Activated naive CD4-positive, alpha-beta T cell treated with anti-CD3 and anti-CD28 coated beads for 36 hours (primary cell): ENCODE measurements at regions of chr6 and their contacts with region 1.

Region 1: DNA sequence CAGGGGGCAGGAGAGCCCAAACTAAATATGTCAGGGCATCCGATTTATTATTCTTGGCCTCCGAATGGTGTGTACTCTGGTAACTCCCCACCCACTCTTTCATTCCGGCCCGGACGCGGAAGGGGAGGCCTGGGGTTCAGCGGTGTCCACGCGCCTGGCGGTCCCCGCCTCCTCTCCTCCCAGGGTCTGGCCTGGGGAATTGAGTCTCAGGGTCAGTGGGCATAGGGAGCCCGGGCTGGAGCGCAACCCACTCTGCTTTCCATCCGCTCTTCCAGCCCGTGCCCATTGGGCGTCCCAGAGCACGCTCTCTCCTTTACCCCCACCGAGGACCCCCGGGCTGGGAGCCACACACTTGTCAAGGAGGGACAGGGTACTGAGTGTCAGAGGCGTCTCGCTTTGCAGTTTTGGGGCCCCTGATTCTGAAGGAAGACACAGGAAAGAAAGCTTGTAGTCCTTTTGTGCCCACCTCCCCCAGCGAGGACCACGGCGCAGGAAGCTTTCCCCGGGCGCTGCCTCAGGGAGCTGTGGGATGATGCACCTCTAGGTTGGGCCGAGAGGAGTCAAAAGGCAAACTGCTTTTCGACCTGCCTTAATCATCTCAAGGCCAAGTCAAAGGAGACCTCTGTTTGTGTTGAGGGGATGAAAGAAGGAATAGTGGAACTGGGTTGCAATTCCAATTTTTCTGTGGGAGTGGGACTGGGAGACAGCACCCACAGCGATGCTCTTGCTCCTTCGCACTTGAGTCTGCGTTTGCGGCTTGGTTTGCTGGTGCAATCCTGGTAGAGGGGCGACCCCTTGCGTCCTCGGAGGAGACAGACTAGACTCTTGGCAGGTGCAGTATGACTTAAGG is 2.5 kb downstream of the RSPO3 start:
- DNase-seq: peak; percentile 90
- H3K4me3 Mint-ChIP-seq: no peak overlapping the region
- H3K27ac Mint-ChIP-seq: no peak overlapping the region
- H3K4me1 Mint-ChIP-seq: peaks cover 12% of the 10 kb centered on the region
- H3K27me3 Mint-ChIP-seq: peaks cover 51% of the 10 kb centered on the region

Region 2: DNA sequence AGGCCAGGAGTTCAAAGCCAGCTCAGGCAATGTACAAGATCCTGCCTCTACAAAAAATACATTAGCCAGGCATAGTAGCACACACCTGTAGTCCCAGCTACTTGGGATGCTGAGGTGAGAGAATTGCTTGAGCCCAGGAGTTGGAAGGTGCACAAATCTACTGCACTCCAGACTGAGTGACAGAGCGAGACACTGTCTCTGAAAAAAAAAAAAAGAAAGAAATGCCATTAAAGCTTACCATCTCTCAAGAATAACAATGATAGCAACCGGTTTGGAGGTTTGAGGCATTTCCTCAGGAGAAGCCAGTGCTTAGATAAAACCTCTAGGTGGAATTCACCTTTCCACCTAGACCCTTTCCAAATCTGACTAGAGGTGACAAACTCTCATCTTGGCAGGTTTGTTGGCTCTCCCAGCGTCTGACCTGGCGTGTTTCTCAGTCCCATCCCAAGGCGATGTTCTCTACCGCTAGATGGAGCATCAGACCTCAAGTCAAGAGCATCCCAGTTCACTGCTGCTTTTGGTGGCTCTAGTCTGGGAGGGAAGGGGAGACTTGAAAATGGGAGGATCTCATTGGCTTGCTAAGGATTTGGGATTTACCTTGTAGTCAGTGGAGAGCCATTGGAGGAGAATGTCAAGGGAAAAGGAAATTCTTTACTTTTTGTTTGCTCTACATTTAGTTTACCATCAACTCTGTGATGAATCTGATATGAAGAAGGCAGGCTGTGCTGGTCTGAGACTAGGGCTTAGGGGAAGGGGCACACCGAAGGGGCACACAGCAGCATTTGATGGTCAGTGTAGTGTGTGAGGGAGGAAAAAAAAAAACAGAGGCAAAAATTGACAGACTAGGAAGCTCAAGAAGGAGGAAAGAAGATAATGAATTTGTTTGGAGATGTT is 1262.3 kb before region 1 on chr6:
- CTCF ChIA-PET with region 1: no interaction called
- intact Hi-C with region 1: loop called (anchors 1 kb)
- DNase-seq: peak; percentile 57
- H3K4me3 Mint-ChIP-seq: no peak overlapping the region
- H3K27ac Mint-ChIP-seq: no peak overlapping the region
- H3K4me1 Mint-ChIP-seq: no peaks in the 10 kb centered on the region
- H3K27me3 Mint-ChIP-seq: no peaks in the 10 kb centered on the region

Region 3: GRCh38 chr6:126033696-126034095 is 1087.3 kb before region 1 on chr6:
- CTCF ChIA-PET with region 1: no interaction called
- intact Hi-C with region 1: loop called (anchors 1 kb)
- DNase-seq: no peak
- H3K4me3 Mint-ChIP-seq: no peak overlapping the region
- H3K27ac Mint-ChIP-seq: no peak overlapping the region
- H3K4me1 Mint-ChIP-seq: no peaks in the 10 kb centered on the region
- H3K27me3 Mint-ChIP-seq: no peaks in the 10 kb centered on the region

Region 4: DNA sequence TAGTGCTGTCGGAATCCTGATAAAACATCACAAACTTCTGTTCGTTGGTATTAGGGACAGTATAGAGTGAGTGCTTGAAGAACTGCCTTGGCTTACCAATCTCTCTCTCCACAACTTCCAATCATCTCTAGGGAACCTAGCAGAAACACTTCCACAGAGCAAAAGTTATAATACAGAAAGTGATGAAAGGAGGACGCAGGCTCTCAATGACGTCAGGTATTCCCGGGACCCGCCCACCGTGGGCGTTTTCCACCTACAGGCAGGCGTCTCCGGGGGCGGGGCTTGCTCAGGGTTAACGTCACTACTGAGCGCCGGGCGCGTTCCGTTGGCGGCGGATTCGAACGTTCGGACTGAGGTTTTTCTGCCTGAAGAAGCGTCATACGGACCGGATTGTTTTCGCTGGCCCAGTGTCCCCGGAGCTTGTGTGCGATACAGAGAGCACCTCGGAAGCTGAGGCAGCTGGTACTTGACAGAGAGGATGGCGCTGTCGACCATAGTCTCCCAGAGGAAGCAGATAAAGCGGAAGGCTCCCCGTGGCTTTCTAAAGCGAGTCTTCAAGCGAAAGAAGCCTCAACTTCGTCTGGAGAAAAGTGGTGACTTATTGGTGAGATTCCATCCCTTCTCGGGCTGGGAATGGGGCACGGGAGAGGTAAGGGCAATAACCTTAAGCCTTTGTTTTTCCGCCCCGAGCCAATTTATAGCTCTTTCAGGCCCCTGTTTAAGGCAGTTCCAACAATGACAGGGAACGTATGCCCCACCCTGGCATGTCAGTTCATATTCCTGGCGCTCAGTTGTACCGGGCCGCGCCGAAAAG is 781.0 kb before region 1 on chr6 and contains the start of gene CENPW:
- CTCF ChIA-PET with region 1: no interaction called
- intact Hi-C with region 1: loop called (anchors 5 kb)
- DNase-seq: peak; percentile 98
- H3K4me3 Mint-ChIP-seq: no peak within 1 kb of the TSS
- H3K27ac Mint-ChIP-seq: no peak within 1 kb of the TSS
- H3K4me1 Mint-ChIP-seq: peaks cover 14% of the 10 kb centered on the region
- H3K27me3 Mint-ChIP-seq: no peaks in the 10 kb centered on the region
- total RNA-seq, gene CENPW: 77.8 to 85.8 TPM

Region 5: DNA sequence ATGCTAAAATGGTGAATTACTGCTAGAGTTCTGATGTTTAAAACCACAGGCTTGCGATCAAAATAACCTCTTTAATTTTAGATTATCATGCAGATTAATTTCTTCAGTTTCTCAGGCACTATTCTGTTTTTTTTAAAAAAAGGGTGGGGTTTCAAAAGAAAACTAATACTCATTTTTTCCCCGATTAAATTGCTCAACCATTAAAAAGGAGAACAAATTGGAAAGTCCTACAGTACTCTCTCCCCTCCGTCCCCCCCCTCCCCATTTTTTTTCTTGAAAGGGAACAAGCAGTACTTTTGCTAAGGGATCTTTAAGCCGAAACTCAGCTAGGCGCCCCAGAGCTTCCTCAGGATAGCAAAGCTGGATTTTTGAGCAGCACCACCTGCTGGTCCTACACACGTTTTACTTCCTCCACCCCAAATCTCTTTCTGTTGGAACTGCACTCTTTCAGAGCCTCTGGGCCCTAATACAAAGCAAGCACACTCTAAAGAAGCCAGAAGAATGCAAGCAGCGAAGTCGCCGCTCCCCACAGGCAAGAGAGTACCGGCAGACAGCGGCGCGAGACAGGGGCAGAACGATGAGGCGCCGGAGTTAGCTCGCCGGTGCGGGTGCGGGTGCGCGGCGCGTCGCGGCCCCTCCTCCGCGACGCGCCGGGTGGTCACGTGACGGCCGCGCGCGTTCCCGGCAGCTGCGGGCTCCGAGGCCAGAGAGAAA is 145.3 kb after region 1 on chr6 and contains the start of gene RNF146:
- CTCF ChIA-PET with region 1: interaction called, 3 read pairs
- intact Hi-C with region 1: loop called (anchors 2 kb)
- DNase-seq: peak; percentile 74
- H3K4me3 Mint-ChIP-seq: peak within 1 kb of the TSS; percentile 100
- H3K27ac Mint-ChIP-seq: peak within 1 kb of the TSS; percentile 100
- H3K4me1 Mint-ChIP-seq: peaks cover 25% of the 10 kb centered on the region
- H3K27me3 Mint-ChIP-seq: no peaks in the 10 kb centered on the region
- total RNA-seq, gene RNF146: 9.7 to 10.8 TPM